IMR-90 (cell line): ENCODE measurements at regions of chr7 and their contacts with region 1.

Region 1: GRCh38 chr7:43700059-43700501 is 29.2 kb downstream of the COA1 start:
- DNase-seq: peak; percentile 82
- ATAC-seq: peak; percentile 32; the same call in 1 of the 2 replicates
- H3K4me3 ChIP-seq: no peak overlapping the region
- H3K27ac ChIP-seq: no peak overlapping the region
- H3K4me1 ChIP-seq: peaks cover 9% of the 10 kb centered on the region
- H3K27me3 ChIP-seq: no peaks in the 10 kb centered on the region
- CTCF ChIP-seq: peak; percentile 89
- POLR2A ChIP-seq: peak; percentile 50; the same call in 1 of the 2 replicates
- RAD21 ChIP-seq: peak; percentile 93

Region 2: GRCh38 chr7:42931834-42932651 is 768.0 kb before region 1 on chr7 and contains the starts of genes MRPL32 and PSMA2:
- CTCF ChIA-PET with region 1: no interaction called
- POLR2A ChIA-PET with region 1: no interaction called
- dilution Hi-C with region 1: no loop called
- in situ Hi-C with region 1: no loop called
- intact Hi-C with region 1: loop called (anchors 5 kb)
- DNase-seq: peak; percentile 97
- ATAC-seq: peak; percentile 99
- H3K4me3 ChIP-seq: peak within 1 kb of the TSS; percentile 69
- H3K27ac ChIP-seq: peak within 1 kb of the TSS; percentile 83
- H3K4me1 ChIP-seq: peaks cover 4% of the 10 kb centered on the region
- H3K27me3 ChIP-seq: no peaks in the 10 kb centered on the region
- CTCF ChIP-seq: no peak
- POLR2A ChIP-seq: peak; percentile 81
- RAD21 ChIP-seq: no peak
- total RNA-seq, gene MRPL32: 42.3 and 56.7 TPM in 2 replicates
- total RNA-seq, gene PSMA2: 138 and 217 TPM in 2 replicates

Region 3: DNA sequence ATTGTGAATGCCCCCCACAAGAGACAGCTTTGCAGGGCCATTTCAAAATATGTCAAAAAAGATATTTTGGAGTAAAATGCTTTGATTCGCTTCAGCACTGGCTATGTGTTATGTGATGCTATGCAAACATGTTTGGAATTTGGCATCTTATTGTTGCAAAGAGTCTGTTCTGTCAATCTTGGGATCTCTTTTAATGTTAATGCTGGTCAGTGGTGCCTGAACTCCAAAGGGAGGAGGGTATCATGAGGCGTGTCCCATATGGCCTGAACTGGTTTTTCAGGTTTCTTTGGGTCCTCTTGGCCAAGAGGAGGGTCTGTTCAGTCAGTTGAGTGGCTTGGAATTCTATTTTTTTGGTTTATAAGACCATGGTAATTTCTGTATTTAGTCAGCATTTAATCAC is 506.2 kb before region 1 on chr7:
- CTCF ChIA-PET with region 1: no interaction called
- POLR2A ChIA-PET with region 1: no interaction called
- dilution Hi-C with region 1: no loop called
- in situ Hi-C with region 1: no loop called
- intact Hi-C with region 1: loop called (anchors 10 kb)
- DNase-seq: no peak
- ATAC-seq: no peak
- H3K4me3 ChIP-seq: no peak overlapping the region
- H3K27ac ChIP-seq: no peak overlapping the region
- H3K4me1 ChIP-seq: peaks cover 3% of the 10 kb centered on the region; the same call in 1 of the 2 replicates
- H3K27me3 ChIP-seq: no peaks in the 10 kb centered on the region; the same call in 1 of the 2 replicates
- CTCF ChIP-seq: no peak
- POLR2A ChIP-seq: no peak
- RAD21 ChIP-seq: no peak

Region 4: DNA sequence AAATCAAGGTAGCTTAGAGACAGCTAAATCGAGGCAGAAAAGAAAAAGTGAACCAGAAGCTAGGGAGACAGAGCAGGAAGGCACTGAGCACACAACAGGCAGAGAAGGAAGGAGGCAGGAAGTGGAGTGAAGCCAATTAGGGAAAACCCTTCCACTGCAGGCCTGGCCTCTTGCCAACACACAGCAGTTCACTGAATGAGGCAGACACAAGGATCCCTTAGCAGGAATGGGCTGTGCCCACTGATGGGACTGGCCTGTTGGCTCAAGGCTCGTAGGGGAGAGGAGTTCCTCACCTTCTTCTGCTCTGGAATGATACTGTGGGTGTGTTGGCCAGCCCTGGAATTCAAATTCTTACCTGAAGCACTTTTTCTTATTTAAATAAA is 337.4 kb before region 1 on chr7:
- CTCF ChIA-PET with region 1: no interaction called
- POLR2A ChIA-PET with region 1: no interaction called
- dilution Hi-C with region 1: no loop called
- in situ Hi-C with region 1: no loop called
- intact Hi-C with region 1: no loop called
- DNase-seq: peak; percentile 6
- ATAC-seq: no peak
- H3K4me3 ChIP-seq: no peak overlapping the region
- H3K27ac ChIP-seq: no peak overlapping the region
- H3K4me1 ChIP-seq: no peaks in the 10 kb centered on the region
- H3K27me3 ChIP-seq: no peaks in the 10 kb centered on the region
- CTCF ChIP-seq: no peak
- POLR2A ChIP-seq: no peak
- RAD21 ChIP-seq: no peak

Region 5: DNA sequence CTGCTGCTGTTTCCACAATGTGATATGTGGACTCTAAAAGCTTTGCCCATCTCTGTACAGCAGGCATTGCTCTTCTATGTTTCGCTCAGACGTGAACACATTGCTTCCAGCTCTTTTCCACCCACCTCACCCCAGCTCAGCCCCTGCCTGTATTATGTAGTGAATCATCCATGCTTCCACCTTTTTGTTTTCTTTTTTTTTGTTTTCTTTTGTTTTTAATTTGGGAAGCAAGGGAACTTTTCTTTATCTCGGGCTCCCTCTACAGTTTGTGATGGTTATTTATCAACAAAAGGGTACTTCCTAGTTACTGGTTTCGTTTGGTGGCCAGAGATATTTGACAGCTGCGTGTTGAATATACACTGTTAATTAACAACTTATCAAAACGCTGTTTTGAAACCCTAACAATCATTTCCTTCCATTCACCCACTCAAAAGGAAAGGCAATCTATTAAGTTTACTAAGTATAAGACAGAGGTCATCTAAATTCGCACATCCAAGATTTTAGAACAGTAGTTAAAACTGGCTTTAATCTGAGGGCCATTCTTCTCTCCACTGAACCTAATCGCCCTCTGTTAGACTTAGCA is 245.1 kb before region 1 on chr7:
- CTCF ChIA-PET with region 1: no interaction called
- POLR2A ChIA-PET with region 1: no interaction called
- dilution Hi-C with region 1: no loop called
- in situ Hi-C with region 1: no loop called
- intact Hi-C with region 1: loop called (anchors 5 kb)
- DNase-seq: peak; percentile 42
- ATAC-seq: peak; percentile 63
- H3K4me3 ChIP-seq: no peak overlapping the region
- H3K27ac ChIP-seq: no peak overlapping the region
- H3K4me1 ChIP-seq: no peaks in the 10 kb centered on the region
- H3K27me3 ChIP-seq: peaks cover 5% of the 10 kb centered on the region
- CTCF ChIP-seq: peak; percentile 54
- POLR2A ChIP-seq: no peak
- RAD21 ChIP-seq: peak; percentile 48

Region 6: GRCh38 chr7:43647673-43648472 is 52.2 kb before region 1 on chr7:
- CTCF ChIA-PET with region 1: interaction called, 10 read pairs
- POLR2A ChIA-PET with region 1: no interaction called
- dilution Hi-C with region 1: no loop called
- in situ Hi-C with region 1: no loop called
- intact Hi-C with region 1: loop called (anchors 1 kb)
- DNase-seq: peak; percentile 100
- ATAC-seq: peak; percentile 68
- H3K4me3 ChIP-seq: peak overlapping the region; percentile 1; the same call in 1 of the 2 replicates
- H3K27ac ChIP-seq: peak overlapping the region; percentile 95
- H3K4me1 ChIP-seq: peaks cover 42% of the 10 kb centered on the region
- H3K27me3 ChIP-seq: no peaks in the 10 kb centered on the region
- CTCF ChIP-seq: no peak
- POLR2A ChIP-seq: peak; percentile 79
- RAD21 ChIP-seq: no peak

Region 7: DNA sequence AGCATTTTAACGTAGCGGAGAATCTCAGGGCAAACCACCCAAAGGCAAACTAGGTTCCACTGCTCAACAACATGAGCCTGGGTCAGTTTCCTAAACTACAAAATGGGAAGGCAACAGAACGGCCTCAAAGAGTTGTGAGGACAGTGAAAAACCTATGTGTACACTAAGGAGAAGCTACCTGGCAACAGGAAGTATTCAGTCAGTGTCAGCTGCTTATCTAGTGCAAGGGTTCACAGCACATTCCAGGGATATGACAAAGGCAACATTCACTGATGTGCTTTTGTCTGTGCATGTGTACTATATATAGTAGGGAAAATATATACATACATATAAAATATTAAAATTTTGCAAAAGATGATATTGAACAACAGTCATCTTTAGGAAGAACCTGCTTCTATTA is 773.2 kb after region 1 on chr7:
- CTCF ChIA-PET with region 1: no interaction called
- POLR2A ChIA-PET with region 1: no interaction called
- dilution Hi-C with region 1: no loop called
- in situ Hi-C with region 1: no loop called
- intact Hi-C with region 1: no loop called
- DNase-seq: peak; percentile 45
- ATAC-seq: no peak
- H3K4me3 ChIP-seq: no peak overlapping the region
- H3K27ac ChIP-seq: no peak overlapping the region
- H3K4me1 ChIP-seq: peaks cover 8% of the 10 kb centered on the region
- H3K27me3 ChIP-seq: no peaks in the 10 kb centered on the region
- CTCF ChIP-seq: no peak
- POLR2A ChIP-seq: no peak
- RAD21 ChIP-seq: no peak